ENCODE measurements at regions of chr6 and their contacts with region 1.

Region 1: DNA sequence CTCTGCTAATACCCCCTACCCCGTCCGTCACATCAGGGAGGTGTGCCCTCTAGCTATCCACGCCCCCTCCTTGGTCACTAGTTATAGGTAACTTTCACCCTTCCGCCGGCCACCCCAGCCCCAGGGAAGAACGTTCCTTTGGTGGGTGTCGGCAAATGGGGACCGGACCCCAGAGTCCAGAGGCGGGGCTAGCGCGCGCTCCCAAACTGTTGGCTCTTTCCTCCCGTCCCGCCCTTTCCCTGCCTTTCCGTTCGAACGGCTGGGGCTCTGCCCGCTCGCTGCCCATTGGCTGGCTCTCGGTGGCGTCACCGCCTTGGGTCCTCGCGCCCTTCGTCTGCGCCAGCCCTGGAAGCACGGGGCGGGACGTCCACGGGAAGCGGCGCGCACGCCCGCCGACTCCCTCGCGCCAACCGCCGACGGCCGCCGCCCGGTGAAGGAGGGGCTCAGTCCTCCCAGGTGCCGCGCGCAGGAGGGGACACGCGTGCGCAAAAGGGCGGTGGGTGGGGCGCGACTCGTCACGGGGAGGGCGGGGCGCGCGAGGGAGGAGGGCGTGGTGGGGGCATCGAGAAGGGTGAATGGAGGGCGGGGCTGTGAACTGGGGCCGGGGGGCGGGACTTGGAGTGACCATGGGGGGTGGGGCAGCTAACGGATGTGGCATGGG is 634 bp upstream of the PHF1 start:
- DNase-seq: peak; percentile 98
- H3K4me3 ChIP-seq: peak overlapping the region; percentile 71 to 76
- H3K27ac ChIP-seq: peak overlapping the region; percentile 83 to 95
- H3K4me1 ChIP-seq: peaks cover 0 to 17% of the 10 kb centered on the region in 2 experiments; a peak in 1 of 4 replicates
- H3K27me3 ChIP-seq: no peaks in the 10 kb centered on the region
- CTCF ChIP-seq: no peak
- EP300 ChIP-seq: peak; percentile 8 to 38; a peak in 1 of 4 replicates
- RAD21 ChIP-seq: no peak

Region 2: DNA sequence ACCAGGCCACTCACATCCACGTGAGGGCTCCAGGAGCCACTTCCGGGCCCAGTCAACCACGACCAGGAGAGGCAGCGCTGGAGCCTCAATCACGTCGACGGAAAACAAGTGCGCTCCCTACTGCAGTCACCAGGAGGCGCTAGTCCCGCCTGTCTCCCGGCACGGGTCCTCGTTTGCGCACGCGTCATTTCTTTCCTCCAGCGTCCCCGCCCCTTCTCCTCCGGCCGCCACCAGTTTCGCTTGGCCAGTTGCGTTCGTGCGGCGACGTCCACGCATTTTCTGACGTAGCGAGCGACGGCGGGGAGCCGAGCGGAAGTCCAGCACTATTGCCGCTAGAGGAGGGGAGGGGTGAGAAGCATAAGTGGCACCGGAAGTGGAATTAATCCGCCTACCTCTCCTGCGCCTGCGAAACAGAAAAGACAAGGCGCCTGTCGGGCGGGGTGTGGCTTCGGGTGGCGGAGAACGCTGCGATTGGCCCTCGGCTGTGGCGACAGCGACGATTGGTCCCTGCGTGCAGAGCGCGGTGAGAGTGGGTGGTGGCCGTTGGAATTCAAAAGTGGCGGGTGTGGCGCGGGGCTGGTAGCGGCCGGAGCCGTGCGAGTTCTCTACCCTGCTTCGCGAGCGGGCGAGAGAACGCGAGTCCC is 18.8 kb before region 1 on chr6 and contains the start of gene KIFC1:
- CTCF ChIA-PET with region 1: interaction called, 10 read pairs
- POLR2A ChIA-PET with region 1: no interaction called
- DNase-seq: peak; percentile 93
- H3K4me3 ChIP-seq: peak within 1 kb of the TSS; percentile 66 to 92
- H3K27ac ChIP-seq: peak within 1 kb of the TSS; percentile 84 to 87
- H3K4me1 ChIP-seq: peaks cover 0 to 16% of the 10 kb centered on the region in 2 experiments; a peak in 3 of 4 replicates
- H3K27me3 ChIP-seq: no peaks in the 10 kb centered on the region
- CTCF ChIP-seq: peak; percentile 87
- EP300 ChIP-seq: no peak; a peak in 1 of 4 replicates
- RAD21 ChIP-seq: peak; percentile 67
- polyA plus RNA-seq, gene KIFC1: 29.6 and 35.9 TPM in 2 replicates

Measured in SK-N-SH (cell line).